ENCODE measurements at regions of chr4 and their contacts with region 1.

Region 1: GRCh38 chr4:140756319-140757231 is at the start of gene TBC1D9:
- DNase-seq: peak; percentile 84 to 93
- ATAC-seq: peak; percentile 85 to 93 (median 90)
- H3K4me3 ChIP-seq: peak within 1 kb of the TSS; percentile 65 to 95 (median 85)
- H3K27ac ChIP-seq: peak within 1 kb of the TSS; percentile 87 to 100 (median 98)
- H3K4me1 ChIP-seq: peaks cover 0 to 47% (median 31%) of the 10 kb centered on the region in 9 donors
- H3K27me3 ChIP-seq: peaks cover 0 to 14% (median 0%) of the 10 kb centered on the region in 7 donors
- CTCF ChIP-seq: peak in 2 of 9 donors; percentile 13 to 25
- total RNA-seq, gene TBC1D9: 9.9 to 20.3 (median 14.6) TPM

Region 2: DNA sequence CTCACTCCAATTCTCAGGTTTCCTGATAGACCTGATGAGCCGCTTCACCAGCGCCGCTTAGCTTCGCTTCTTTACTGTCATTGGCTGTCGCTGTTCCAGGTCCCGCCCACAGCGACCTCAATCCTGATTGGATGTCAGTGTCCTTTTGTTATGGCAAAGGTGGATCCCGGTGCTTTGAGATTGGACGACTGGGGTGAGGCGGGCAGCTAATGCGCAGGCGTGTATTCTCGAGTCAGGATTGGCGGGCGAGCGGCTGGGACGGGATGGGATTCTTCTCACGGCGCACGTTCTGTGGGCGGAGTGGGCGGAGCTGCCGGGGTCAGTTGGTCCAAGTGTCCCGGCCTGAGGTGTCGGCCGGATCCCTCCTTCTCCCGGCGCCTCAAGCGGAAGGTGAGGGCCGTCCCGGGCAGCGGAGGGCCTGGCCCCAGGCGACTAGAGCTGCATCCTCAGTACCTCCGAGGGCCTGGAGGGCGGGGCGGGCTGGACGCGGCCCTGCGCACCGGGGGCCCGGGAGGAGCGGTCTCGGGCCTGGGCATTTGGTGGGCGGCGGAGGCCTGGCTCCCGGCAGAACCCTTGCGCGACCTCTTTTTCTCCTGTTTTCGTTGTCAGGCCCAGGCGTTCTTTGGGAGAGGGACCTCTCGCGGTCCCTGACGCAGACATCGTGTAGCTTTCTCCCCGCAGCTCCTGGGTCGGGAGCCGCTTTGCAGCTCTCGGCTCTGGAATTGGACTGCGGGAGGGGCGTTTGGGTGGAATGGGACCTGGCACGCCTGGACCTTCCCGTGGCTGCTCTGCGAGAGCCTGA is 383.0 kb before region 1 on chr4 and contains the start of gene SCOC:
- intact Hi-C with region 1: loop called in 2 of 10 experiments (anchors 5 kb)
- DNase-seq: peak; percentile 98 to 99
- ATAC-seq: peak; percentile 98 to 100 (median 99)
- H3K4me3 ChIP-seq: peak within 1 kb of the TSS; percentile 72 to 96 (median 85)
- H3K27ac ChIP-seq: peak within 1 kb of the TSS; percentile 84 to 97 (median 94)
- H3K4me1 ChIP-seq: peaks cover 0 to 53% (median 42%) of the 10 kb centered on the region in 9 donors
- H3K27me3 ChIP-seq: no peaks in the 10 kb centered on the region
- CTCF ChIP-seq: no peak
- total RNA-seq, gene SCOC: 61.8 to 76.8 (median 67.0) TPM

Region 3: DNA sequence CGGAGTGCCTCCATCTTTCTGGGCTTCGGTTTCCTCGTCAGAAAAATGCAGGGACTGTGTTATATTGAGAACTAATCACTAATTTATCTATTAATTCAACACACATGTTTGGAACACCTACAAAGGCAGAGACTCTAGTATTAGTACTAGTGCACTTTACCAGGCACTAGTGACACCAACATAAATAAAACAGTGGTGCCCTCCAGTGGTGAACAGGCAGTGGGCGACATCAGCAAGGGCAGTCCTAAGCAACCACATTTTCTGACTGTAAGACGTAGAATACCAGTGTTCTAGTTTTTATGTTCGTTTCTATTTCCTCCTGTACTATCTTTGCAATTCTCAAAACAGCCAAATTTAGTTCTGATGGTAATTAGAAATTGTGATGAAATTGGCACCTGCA is 118.7 kb before region 1 on chr4:
- intact Hi-C with region 1: loop called in 3 of 10 experiments (anchors 5 to 10 kb)
- DNase-seq: no peak
- ATAC-seq: peak in 1 of 8 donors; percentile 43
- H3K4me3 ChIP-seq: no peak overlapping the region
- H3K27ac ChIP-seq: no peak overlapping the region
- H3K4me1 ChIP-seq: peaks cover 0 to 23% (median 13%) of the 10 kb centered on the region in 9 donors
- H3K27me3 ChIP-seq: no peaks in the 10 kb centered on the region
- CTCF ChIP-seq: peak in 8 of 9 donors; percentile 29 to 57 (median 44)

Region 4: DNA sequence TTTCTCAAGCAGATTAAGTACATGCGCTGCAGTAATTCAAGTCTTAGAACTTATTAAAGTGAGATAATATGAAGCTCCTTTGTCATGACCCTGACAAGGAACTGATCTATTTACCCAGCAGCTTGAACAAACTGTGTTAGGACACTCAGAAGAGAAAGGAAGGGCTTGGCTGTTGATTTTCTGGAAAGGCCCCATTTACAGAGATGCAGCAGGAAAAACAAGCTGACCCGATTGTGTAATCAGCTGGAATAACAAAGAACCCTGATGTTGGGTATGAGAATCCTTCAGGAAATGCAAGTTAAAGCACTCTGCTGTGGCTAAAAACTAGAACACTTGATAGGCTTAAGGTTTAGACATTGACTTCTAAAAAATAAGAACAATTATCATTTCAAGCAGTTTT is 65.2 kb before region 1 on chr4:
- intact Hi-C with region 1: loop called in 2 of 10 experiments (anchors 5 kb)
- DNase-seq: no peak
- ATAC-seq: peak; percentile 52 to 87 (median 65)
- H3K4me3 ChIP-seq: no peak overlapping the region
- H3K27ac ChIP-seq: peak overlapping the region in 8 of 10 donors; percentile 23 to 75 (median 46)
- H3K4me1 ChIP-seq: peaks cover 0 to 59% (median 34%) of the 10 kb centered on the region in 9 donors
- H3K27me3 ChIP-seq: no peaks in the 10 kb centered on the region
- CTCF ChIP-seq: no peak

Region 5: GRCh38 chr4:140711910-140712309 is 44.7 kb before region 1 on chr4:
- intact Hi-C with region 1: loop called in 1 of 10 experiments (anchors 5 kb)
- DNase-seq: no peak
- ATAC-seq: no peak
- H3K4me3 ChIP-seq: no peak overlapping the region
- H3K27ac ChIP-seq: no peak overlapping the region
- H3K4me1 ChIP-seq: peaks cover 0 to 48% (median 26%) of the 10 kb centered on the region in 9 donors
- H3K27me3 ChIP-seq: no peaks in the 10 kb centered on the region
- CTCF ChIP-seq: no peak

Region 6: DNA sequence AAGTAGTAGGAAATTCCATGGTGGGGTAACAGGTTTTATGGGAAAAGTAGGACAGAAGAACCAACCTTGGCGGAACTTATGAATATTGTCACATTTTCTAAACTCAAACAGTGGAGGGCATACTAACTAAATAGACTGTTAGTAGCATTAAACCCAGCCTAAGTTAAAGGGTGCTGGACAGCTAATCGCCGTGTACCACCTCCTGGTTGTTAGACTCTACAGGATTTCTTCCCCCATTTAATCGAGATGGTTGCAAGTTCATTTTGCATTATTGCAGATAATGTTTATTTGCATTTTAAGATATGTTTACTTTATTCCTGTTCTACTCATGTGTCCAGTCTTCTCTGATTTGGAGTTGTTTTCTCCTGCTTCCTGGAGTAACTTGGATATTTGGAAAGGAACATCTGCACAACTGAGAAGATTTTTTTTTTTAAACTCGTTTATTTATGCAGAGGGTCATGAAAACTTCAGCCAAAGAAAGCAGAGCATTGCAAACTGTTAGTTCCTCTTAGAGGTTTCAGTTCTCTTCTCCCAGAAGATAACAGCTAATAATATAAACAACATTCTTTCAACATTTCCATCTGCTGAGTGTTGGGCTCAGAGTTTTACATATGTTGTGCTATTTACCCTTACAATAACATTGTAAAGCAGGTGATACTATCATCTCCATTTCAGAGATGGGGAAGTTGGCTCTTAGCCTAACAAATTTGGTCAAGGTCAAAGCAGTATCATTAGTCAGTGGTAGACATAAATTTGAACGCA is 51.1 kb after region 1 on chr4:
- intact Hi-C with region 1: no loop called
- DNase-seq: no peak
- ATAC-seq: peak in 6 of 8 donors; percentile 35 to 77 (median 63)
- H3K4me3 ChIP-seq: no peak overlapping the region
- H3K27ac ChIP-seq: peak overlapping the region in 5 of 10 donors; percentile 5 to 70 (median 37)
- H3K4me1 ChIP-seq: peaks cover 0 to 41% (median 12%) of the 10 kb centered on the region in 9 donors
- H3K27me3 ChIP-seq: no peaks in the 10 kb centered on the region
- CTCF ChIP-seq: no peak

Region 7: GRCh38 chr4:140851032-140851636 is 94.6 kb after region 1 on chr4:
- intact Hi-C with region 1: loop called in 4 of 10 experiments (anchors 5 to 10 kb)
- DNase-seq: peak in 1 of 2 donors; percentile 63
- ATAC-seq: peak in 6 of 8 donors; percentile 58 to 71 (median 64)
- H3K4me3 ChIP-seq: no peak overlapping the region
- H3K27ac ChIP-seq: no peak overlapping the region
- H3K4me1 ChIP-seq: peaks cover 0 to 19% (median 0%) of the 10 kb centered on the region in 9 donors
- H3K27me3 ChIP-seq: no peaks in the 10 kb centered on the region
- CTCF ChIP-seq: peak; percentile 59 to 92 (median 78)